Transverse colon (tissue), 4 donors: ENCODE measurements at regions of chr1 and their contacts with region 1.

Region 1: DNA sequence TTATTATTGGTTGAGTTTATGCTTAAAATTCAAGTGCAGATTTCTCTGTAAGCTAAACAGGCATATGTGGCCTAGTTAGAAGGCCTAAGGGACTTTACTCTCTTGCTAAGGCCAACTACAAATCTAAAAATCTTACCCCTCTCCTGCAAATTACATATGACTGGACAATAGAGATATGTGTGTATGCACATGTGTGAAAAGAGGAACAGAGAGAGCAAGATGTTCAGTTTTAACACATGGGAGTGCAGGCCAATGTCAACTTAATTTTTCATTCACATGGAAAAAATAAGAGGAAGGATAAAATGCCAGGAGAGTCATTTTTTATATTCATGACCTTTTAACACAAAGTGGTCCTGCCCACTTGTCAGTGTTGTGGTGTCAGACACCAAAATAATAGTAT is 8.5 kb downstream of the OR10K2 start:
- DNase-seq: no peak
- H3K4me3 ChIP-seq: no peak overlapping the region
- H3K27ac ChIP-seq: no peak overlapping the region
- H3K4me1 ChIP-seq: no peaks in the 10 kb centered on the region
- H3K27me3 ChIP-seq: no peaks in the 10 kb centered on the region
- CTCF ChIP-seq: no peak
- EP300 ChIP-seq: no peak
- POLR2A ChIP-seq: no peak

Region 2: GRCh38 chr1:158163000-158163947 is 254.3 kb before region 1 on chr1:
- in situ Hi-C with region 1: no loop called
- intact Hi-C with region 1: no loop called
- DNase-seq: peak; percentile 28
- H3K4me3 ChIP-seq: no peak overlapping the region
- H3K27ac ChIP-seq: no peak overlapping the region
- H3K4me1 ChIP-seq: peaks cover 0 to 4% (median 0%) of the 10 kb centered on the region in 4 donors
- H3K27me3 ChIP-seq: peaks cover 23% of the 10 kb centered on the region
- CTCF ChIP-seq: no peak
- EP300 ChIP-seq: no peak
- POLR2A ChIP-seq: no peak

Region 3: GRCh38 chr1:158516966-158517365 is 99.4 kb after region 1 on chr1:
- in situ Hi-C with region 1: no loop called
- intact Hi-C with region 1: loop called (anchors 5 kb)
- DNase-seq: no peak
- H3K4me3 ChIP-seq: no peak overlapping the region
- H3K27ac ChIP-seq: no peak overlapping the region
- H3K4me1 ChIP-seq: no peaks in the 10 kb centered on the region
- H3K27me3 ChIP-seq: no peaks in the 10 kb centered on the region
- CTCF ChIP-seq: no peak
- EP300 ChIP-seq: no peak
- POLR2A ChIP-seq: no peak